ENCODE measurements at regions of chr1 and their contacts with region 1.

Region 1: DNA sequence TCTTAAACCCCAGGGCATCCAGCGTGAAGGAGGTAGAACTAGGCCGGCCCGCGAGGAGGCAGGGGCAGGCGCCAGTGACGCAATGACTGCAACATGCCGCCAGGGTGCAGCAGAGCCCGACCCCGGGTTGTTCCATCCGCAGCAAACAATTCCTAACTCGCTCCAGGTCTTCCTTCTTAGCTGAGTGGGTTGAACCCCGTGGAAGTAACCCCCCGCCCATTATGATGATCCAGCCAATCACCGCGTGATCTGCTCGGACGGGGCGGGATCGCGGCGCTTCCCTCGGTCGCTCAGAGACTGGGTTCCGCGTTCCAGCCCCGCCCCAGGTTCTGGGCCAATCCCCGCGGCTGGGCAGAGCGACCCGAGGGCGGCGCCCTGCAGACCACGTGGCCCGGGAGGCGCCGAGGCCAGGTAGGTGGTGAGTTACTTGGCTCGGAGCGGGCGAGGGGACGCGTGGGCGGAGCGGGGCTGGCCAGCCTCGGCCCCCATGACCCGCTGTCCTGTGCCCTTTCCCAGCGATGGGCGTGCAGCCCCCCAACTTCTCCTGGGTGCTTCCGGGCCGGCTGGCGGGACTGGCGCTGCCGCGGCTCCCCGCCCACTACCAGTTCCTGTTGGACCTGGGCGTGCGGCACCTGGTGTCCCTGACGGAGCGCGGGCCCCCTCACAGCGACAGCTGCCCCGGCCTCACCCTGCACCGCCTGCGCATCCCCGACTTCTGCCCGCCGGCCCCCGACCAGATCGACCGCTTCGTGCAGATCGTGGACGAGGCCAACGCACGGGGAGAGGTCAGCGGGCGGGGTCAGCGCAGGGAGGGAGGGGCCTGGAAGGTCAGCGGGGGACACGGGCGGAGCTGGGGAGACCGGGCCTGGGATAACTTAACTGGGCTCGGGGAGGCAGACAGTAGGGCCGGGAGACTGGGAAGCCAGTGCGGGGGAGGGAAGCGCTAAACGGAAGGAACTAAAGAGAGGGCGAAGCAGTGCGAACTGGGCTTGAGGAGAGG is at the start of gene DUSP23:
- DNase-seq: peak; percentile 95
- ATAC-seq: peak; percentile 95
- H3K4me3 ChIP-seq: peak within 1 kb of the TSS; percentile 46
- H3K27ac ChIP-seq: no peak within 1 kb of the TSS
- H3K4me1 ChIP-seq: peaks cover 19% of the 10 kb centered on the region
- H3K27me3 ChIP-seq: no peaks in the 10 kb centered on the region
- CTCF ChIP-seq: peak; percentile 90
- total RNA-seq, gene DUSP23: 20.4 and 27.6 TPM in 2 replicates

Region 2: GRCh38 chr1:159132271-159132881 is 648.5 kb before region 1 on chr1:
- CTCF ChIA-PET with region 1: no interaction called
- POLR2A ChIA-PET with region 1: no interaction called
- intact Hi-C with region 1: loop called (anchors 10 kb)
- DNase-seq: peak; percentile 78
- ATAC-seq: peak; percentile 64
- H3K4me3 ChIP-seq: no peak overlapping the region
- H3K27ac ChIP-seq: no peak overlapping the region
- H3K4me1 ChIP-seq: no peaks in the 10 kb centered on the region
- H3K27me3 ChIP-seq: peaks cover 84% of the 10 kb centered on the region
- CTCF ChIP-seq: peak; percentile 94

Region 3: DNA sequence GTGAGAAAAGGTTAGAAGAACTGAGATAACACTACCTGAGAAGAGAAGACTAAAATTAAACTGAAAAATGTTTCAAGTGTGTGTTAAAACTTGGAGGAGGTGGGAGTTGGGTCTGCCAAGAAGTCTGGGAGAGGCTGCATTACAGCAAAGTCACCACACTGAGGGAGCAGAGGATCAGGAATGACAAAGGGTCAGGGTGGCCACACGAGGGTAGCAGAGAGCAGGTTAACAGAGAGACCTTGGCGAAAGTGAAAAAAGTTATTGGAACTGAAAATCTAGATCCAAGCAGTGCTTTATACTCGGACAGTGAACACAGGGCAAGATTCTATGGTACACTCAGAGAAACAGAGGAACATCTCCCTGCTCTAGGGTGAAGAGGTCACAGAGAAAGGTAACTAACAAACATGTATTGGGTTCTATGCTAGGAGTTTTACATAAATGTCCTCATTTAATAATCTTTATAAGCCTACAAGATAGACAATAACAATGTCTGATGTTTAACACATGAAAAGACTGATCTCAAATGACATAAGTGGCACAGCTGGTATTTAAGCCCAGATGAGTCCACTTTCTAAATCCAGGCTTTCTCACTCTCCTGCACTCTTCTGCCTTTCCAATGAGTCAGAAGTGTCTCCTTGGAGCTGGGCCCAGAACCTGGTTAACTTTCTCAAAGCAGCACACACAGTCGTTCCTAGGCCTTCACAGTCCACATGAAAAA is 619.7 kb before region 1 on chr1:
- CTCF ChIA-PET with region 1: no interaction called
- POLR2A ChIA-PET with region 1: no interaction called
- intact Hi-C with region 1: loop called (anchors 10 kb)
- DNase-seq: peak; percentile 89
- ATAC-seq: peak; percentile 95
- H3K4me3 ChIP-seq: no peak overlapping the region
- H3K27ac ChIP-seq: no peak overlapping the region
- H3K4me1 ChIP-seq: peaks cover 8% of the 10 kb centered on the region
- H3K27me3 ChIP-seq: peaks cover 50% of the 10 kb centered on the region
- CTCF ChIP-seq: peak; percentile 100

Region 4: DNA sequence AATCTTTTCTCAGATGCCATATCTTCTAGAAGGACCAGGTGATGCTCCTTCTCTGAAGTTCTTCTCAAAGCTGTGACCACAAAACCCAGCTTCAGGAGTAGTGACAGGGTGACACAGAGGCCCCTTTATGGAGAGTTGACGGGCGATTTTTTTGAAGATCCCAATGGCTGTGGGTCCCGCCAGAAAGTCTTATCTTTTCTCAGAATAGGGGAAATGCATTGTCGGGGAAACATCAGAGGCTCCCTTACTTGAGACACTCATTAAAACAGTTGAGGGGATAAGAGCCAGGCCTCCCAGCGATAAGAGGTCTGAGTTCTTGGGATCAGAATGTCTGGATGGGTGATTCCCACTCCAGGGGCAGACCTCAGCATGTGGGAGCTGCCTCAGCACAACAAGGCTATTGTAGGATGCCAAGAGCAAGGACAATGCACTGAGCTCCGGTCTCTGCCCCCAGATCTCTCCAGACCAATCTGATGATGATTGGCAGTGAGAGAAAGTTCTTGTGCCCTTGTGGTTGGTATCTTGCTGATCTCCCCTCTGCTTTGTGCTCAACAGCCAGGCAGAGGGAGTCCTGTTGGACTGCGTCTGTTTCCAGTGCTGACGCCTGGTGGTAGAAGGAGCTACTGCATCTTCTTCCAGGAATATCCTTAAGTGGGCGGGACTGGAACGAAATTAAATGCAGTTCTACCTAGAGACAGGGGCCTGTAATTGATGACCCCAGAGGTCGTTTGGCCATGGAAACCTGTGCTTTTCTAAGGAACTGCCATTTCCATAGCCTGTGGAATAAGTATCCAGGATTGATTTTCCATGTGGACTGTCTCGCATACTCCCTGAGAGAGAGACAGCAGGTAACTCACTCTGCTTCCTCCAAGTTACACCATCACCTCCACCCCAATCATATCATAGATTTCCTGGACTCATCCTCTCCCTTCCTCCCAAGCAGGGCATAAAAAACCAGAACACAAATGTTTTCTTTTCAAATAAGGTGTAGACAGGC is 583.0 kb before region 1 on chr1:
- CTCF ChIA-PET with region 1: no interaction called
- POLR2A ChIA-PET with region 1: no interaction called
- intact Hi-C with region 1: loop called (anchors 10 kb)
- DNase-seq: peak; percentile 88
- ATAC-seq: peak; percentile 94
- H3K4me3 ChIP-seq: no peak overlapping the region
- H3K27ac ChIP-seq: no peak overlapping the region
- H3K4me1 ChIP-seq: no peaks in the 10 kb centered on the region
- H3K27me3 ChIP-seq: peaks cover 85% of the 10 kb centered on the region
- CTCF ChIP-seq: peak; percentile 91

Region 5: GRCh38 chr1:159214149-159214760 is 566.6 kb before region 1 on chr1:
- CTCF ChIA-PET with region 1: no interaction called
- POLR2A ChIA-PET with region 1: no interaction called
- intact Hi-C with region 1: loop called (anchors 5 kb)
- DNase-seq: peak; percentile 72
- ATAC-seq: peak; percentile 74
- H3K4me3 ChIP-seq: no peak overlapping the region
- H3K27ac ChIP-seq: no peak overlapping the region
- H3K4me1 ChIP-seq: peaks cover 4% of the 10 kb centered on the region; the same call in 1 of the 2 replicates
- H3K27me3 ChIP-seq: peaks cover 29% of the 10 kb centered on the region
- CTCF ChIP-seq: peak; percentile 92

Region 6: DNA sequence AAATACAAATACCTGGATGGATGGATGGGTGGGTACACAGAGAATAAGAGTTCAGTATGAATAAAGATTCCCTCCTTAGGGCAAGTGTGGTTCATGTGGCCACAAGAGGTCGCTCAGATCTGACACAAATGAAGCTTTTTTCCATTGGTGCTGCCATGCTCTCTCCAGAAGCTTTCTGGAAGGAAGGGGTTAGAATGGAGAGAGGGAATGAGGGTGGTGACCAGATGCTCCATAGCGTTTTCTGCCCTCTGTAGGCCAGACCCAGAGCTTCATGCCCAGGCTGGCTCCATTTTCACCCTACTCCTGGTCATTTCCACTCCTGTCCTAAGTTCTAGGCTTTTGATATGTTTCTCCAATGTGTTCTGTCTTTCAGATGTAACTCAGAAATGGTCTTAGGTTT is 18.0 kb after region 1 on chr1:
- CTCF ChIA-PET with region 1: interaction called, 8 read pairs
- POLR2A ChIA-PET with region 1: no interaction called
- intact Hi-C with region 1: loop called (anchors 1 kb)
- DNase-seq: peak; percentile 92
- ATAC-seq: peak; percentile 94
- H3K4me3 ChIP-seq: no peak overlapping the region
- H3K27ac ChIP-seq: no peak overlapping the region
- H3K4me1 ChIP-seq: peaks cover 3% of the 10 kb centered on the region; the same call in 1 of the 2 replicates
- H3K27me3 ChIP-seq: peaks cover 33% of the 10 kb centered on the region
- CTCF ChIP-seq: peak; percentile 98

Measured in PC-3 (cell line).